ENCODE measurements at regions of chr7 and their contacts with region 1.

Region 1: DNA sequence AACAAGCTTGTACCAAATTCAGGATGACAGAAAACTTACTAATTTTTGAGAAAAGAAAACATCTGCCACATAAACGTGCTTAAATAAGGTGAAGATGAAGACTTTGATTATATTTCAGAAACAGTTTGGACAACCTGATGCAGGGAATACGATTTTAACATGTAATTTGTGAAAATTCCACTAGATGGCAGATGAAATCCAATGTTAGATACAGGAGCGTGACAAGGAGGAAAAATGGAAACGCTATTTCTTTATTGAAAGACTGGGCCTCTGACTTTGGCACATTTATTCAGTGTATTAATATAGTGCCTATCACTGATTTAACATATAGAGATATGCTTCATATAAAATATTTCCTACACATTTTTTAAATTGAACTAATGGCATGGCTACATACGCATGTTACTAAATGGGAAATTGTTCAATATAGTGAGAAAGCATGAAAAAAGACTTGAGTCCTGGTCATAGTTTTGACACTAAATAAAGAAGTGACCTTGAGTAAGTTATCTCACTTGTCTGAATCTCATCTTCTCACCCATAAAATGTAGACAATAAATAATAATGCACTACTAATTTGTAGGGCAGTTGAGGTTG is 60.7 kb downstream of the CD36 start:
- DNase-seq: no peak
- H3K4me3 ChIP-seq: no peak overlapping the region
- H3K27ac ChIP-seq: peak overlapping the region in 3 of 4 donors; percentile 29 to 51 (median 40)
- H3K4me1 ChIP-seq: peaks cover 0 to 16% (median 14%) of the 10 kb centered on the region in 4 donors
- H3K27me3 ChIP-seq: no peaks in the 10 kb centered on the region
- CTCF ChIP-seq: peak; percentile 46 to 73 (median 64)
- EP300 ChIP-seq: no peak
- POLR2A ChIP-seq: no peak

Region 2: GRCh38 chr7:80659120-80660055 is 39.8 kb before region 1 on chr7:
- intact Hi-C with region 1: no loop called
- DNase-seq: no peak
- H3K4me3 ChIP-seq: no peak overlapping the region
- H3K27ac ChIP-seq: no peak overlapping the region
- H3K4me1 ChIP-seq: peaks cover 0 to 8% (median 4%) of the 10 kb centered on the region in 4 donors
- H3K27me3 ChIP-seq: no peaks in the 10 kb centered on the region
- CTCF ChIP-seq: peak; percentile 42 to 79 (median 58)
- EP300 ChIP-seq: no peak
- POLR2A ChIP-seq: no peak

Region 3: DNA sequence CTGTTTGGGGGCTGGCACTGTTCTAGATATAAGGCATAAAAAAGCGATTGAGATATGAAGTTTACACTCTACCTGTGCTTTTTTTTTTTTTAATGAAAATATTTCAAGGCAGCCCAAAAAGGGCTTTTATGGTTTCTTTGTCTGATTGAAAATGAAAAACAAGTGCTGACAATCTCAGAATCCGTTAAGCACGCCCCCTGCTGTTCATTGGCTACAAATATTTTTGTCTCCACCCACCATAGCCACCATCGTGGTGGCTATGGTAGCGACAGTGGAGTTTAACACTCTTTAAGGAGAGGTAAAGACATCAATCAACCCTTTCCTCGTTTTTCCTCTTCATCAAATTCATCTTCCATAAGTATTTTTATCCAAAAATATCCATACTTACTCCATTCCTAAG is 33.5 kb after region 1 on chr7:
- intact Hi-C with region 1: no loop called
- DNase-seq: no peak
- H3K4me3 ChIP-seq: no peak overlapping the region
- H3K27ac ChIP-seq: no peak overlapping the region
- H3K4me1 ChIP-seq: peaks cover 0 to 12% (median 4%) of the 10 kb centered on the region in 4 donors
- H3K27me3 ChIP-seq: no peaks in the 10 kb centered on the region
- CTCF ChIP-seq: no peak
- EP300 ChIP-seq: no peak
- POLR2A ChIP-seq: no peak

Region 4: DNA sequence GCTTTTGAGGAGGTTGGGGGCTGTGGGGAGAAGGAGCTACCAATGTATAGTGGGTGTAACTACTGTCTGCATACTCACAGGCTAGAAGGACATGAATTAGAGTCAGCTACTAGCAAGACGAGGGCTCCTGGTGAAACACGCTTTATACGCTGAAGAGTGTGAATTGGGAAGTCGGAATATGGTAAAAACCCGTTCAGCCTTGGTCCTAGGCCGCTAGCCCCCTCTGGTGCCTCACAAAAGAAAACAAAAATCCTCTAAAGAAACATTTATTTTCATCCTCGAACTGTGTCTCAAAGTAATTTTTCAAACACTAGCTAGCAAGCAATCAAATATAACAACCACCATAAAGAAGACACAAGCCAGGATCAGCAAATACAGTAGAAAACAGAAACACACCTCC is 557.8 kb after region 1 on chr7:
- intact Hi-C with region 1: loop called (anchors 2 kb)
- DNase-seq: no peak
- H3K4me3 ChIP-seq: no peak overlapping the region
- H3K27ac ChIP-seq: no peak overlapping the region
- H3K4me1 ChIP-seq: no peaks in the 10 kb centered on the region
- H3K27me3 ChIP-seq: no peaks in the 10 kb centered on the region
- CTCF ChIP-seq: peak in 2 of 4 experiments; percentile 14 to 15
- EP300 ChIP-seq: no peak
- POLR2A ChIP-seq: no peak

Region 5: GRCh38 chr7:81469869-81470723 is 771.0 kb after region 1 on chr7:
- intact Hi-C with region 1: loop called (anchors 1 kb)
- DNase-seq: peak; percentile 85
- H3K4me3 ChIP-seq: no peak overlapping the region
- H3K27ac ChIP-seq: no peak overlapping the region
- H3K4me1 ChIP-seq: peaks cover 0 to 9% (median 3%) of the 10 kb centered on the region in 4 donors
- H3K27me3 ChIP-seq: no peaks in the 10 kb centered on the region
- CTCF ChIP-seq: peak; percentile 44 to 70 (median 49)
- EP300 ChIP-seq: no peak
- POLR2A ChIP-seq: no peak